ENCODE measurements at regions of chr13 and their contacts with region 1.

Region 1: DNA sequence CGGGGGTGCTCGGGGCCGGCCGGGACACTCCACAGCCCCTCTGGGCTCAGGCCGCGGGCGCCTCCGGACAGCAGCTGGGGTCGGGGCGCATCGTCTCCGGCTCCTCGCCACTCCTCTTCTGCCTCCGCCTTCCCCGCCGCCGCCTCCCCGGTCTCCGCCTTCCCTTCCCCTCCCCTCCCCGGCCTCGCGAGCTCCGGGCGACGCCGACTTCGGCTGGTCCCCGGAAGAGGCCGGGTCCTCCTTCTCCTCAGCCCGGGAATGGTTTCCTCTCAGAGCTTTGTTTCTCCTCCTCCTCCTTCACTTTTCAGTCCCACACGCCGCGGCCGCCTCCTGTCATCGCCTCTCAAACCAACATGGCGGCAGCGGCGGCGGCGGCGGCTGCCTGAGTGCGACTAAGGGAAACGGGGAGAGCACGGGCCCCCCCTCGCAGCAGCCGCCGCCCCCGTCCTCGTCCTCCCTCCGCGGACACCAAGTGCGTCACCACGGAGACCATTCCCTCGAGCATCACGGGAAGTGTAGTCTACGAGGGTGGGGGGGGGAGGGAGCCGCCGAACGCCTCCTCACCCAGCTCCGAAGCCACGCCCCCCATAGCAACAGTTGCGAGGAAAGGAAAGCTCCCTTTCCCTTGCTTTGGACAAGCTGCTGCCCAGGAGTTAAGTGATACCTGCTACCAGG is at the start of gene UBL3:
- DNase-seq: peak; percentile 95
- ATAC-seq: peak; percentile 91
- H3K4me3 ChIP-seq: peak within 1 kb of the TSS; percentile 81
- H3K27ac ChIP-seq: peak within 1 kb of the TSS; percentile 98
- H3K4me1 ChIP-seq: peaks cover 4% of the 10 kb centered on the region; the same call in 1 of the 2 replicates
- H3K27me3 ChIP-seq: no peaks in the 10 kb centered on the region
- CTCF ChIP-seq: no peak
- POLR2A ChIP-seq: peak; percentile 86
- RAD21 ChIP-seq: no peak
- total RNA-seq, gene UBL3: 19.9 and 30.3 TPM in 2 replicates

Region 2: GRCh38 chr13:29716493-29716892 is 133.9 kb before region 1 on chr13:
- CTCF ChIA-PET with region 1: no interaction called
- POLR2A ChIA-PET with region 1: no interaction called
- dilution Hi-C with region 1: no loop called
- in situ Hi-C with region 1: no loop called
- intact Hi-C with region 1: no loop called
- DNase-seq: no peak
- ATAC-seq: no peak
- H3K4me3 ChIP-seq: no peak overlapping the region
- H3K27ac ChIP-seq: no peak overlapping the region
- H3K4me1 ChIP-seq: no peaks in the 10 kb centered on the region
- H3K27me3 ChIP-seq: peaks cover 63% of the 10 kb centered on the region
- CTCF ChIP-seq: no peak
- POLR2A ChIP-seq: no peak
- RAD21 ChIP-seq: no peak

Region 3: GRCh38 chr13:29771247-29771646 is 79.1 kb before region 1 on chr13:
- CTCF ChIA-PET with region 1: interaction called, 3 read pairs
- POLR2A ChIA-PET with region 1: no interaction called
- dilution Hi-C with region 1: no loop called
- in situ Hi-C with region 1: no loop called
- intact Hi-C with region 1: loop called (anchors 2 kb)
- DNase-seq: peak; percentile 49
- ATAC-seq: no peak; the same call in 1 of the 2 replicates
- H3K4me3 ChIP-seq: no peak overlapping the region
- H3K27ac ChIP-seq: no peak overlapping the region
- H3K4me1 ChIP-seq: 0 out of 2 replicates have a peak, but pooled peaks cover 2% of the 10 kb centered on the region
- H3K27me3 ChIP-seq: no peaks in the 10 kb centered on the region
- CTCF ChIP-seq: peak; percentile 59
- POLR2A ChIP-seq: no peak
- RAD21 ChIP-seq: peak; percentile 64

Region 4: DNA sequence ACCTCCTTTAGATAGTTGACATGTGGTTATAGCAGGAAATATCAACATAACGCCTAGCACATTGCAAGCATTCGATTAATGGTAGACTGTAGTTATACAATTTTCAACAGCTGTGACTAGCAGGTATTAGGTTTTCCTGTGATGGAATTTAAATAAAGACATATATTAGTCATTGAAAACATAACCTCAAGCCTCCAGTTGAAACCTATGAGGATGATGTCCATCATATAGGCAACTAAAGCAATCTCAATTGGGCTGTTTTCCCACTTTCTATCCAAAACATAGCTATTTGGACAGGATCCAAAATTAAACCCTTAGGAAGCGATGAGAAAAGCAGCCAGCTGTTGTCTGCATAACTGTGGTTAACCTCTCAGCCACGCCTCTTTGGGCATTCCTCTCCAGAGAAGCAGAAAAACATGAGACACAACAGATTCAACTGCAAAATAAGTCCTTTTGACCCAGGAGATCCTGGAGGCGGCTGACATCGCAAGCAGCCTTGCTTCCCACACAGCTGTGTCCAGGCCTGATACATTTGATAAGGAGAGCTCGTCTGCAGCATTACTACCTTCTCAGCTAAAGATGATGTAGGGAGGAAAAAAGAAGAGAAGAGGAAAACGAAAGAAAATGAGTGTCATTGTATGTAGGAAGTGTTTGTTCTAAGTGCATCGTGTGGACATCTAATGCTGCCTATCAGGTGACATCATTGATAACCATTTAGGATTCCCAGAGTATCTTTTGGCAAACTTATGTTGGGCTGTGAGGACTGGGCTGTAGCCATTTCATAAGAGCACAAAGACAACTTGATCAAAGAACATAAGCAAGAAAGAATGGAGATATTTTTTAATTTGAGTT is 52.0 kb after region 1 on chr13:
- CTCF ChIA-PET with region 1: no interaction called
- POLR2A ChIA-PET with region 1: no interaction called
- dilution Hi-C with region 1: no loop called
- in situ Hi-C with region 1: no loop called
- intact Hi-C with region 1: loop called (anchors 5 kb)
- DNase-seq: peak; percentile 97
- ATAC-seq: peak; percentile 90
- H3K4me3 ChIP-seq: no peak overlapping the region
- H3K27ac ChIP-seq: no peak overlapping the region
- H3K4me1 ChIP-seq: peaks cover 8% of the 10 kb centered on the region; the same call in 1 of the 2 replicates
- H3K27me3 ChIP-seq: peaks cover 2% of the 10 kb centered on the region; the same call in 1 of the 2 replicates
- CTCF ChIP-seq: no peak
- POLR2A ChIP-seq: no peak
- RAD21 ChIP-seq: no peak; the same call in 1 of the 2 replicates

Region 5: GRCh38 chr13:29923554-29924481 is 73.5 kb after region 1 on chr13:
- CTCF ChIA-PET with region 1: interaction called, 8 read pairs
- POLR2A ChIA-PET with region 1: interaction called, 8 read pairs
- dilution Hi-C with region 1: no loop called
- in situ Hi-C with region 1: no loop called
- intact Hi-C with region 1: loop called (anchors 1 kb)
- DNase-seq: peak; percentile 99
- ATAC-seq: peak; percentile 83
- H3K4me3 ChIP-seq: no peak overlapping the region
- H3K27ac ChIP-seq: peak overlapping the region; percentile 77
- H3K4me1 ChIP-seq: peaks cover 27% of the 10 kb centered on the region
- H3K27me3 ChIP-seq: no peaks in the 10 kb centered on the region
- CTCF ChIP-seq: peak; percentile 80
- POLR2A ChIP-seq: no peak
- RAD21 ChIP-seq: peak; percentile 70

Region 6: DNA sequence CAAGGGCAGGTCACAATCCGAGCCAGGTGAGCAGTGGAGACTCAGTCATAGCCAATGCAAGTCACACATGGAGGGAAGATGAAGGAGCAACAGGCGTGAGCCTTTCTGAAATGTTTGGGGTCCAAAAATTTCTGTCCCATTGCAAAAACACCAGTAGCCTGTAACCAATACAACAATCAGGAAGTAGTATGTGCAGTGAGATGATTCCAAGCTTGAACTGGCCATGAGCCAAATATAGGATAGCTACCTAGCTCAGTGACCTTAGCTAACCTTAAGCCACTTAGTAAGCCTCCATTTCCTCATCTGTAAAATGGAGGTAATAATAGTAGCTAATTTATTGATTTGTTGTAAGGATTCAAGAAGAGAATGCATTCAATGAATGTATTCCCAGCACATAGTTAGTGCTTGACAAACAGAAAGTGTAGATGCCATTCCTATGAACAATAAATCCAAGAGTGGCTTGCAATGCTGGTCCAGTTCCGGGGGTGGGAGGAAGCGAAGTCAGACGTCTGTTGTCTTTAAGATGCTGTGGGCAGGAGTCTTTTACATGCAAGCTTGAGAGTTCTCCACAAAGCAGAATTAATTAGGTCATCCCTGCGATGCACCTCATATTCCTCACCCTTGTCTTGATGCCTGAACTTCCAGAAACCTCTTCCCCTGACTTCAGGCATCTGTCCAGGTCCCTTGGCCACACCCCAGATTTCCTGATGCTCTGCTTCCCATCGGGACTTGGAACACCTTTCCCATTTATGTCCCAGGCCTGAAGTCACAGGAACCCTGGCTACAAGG is 195.7 kb after region 1 on chr13:
- CTCF ChIA-PET with region 1: no interaction called
- POLR2A ChIA-PET with region 1: no interaction called
- dilution Hi-C with region 1: no loop called
- in situ Hi-C with region 1: no loop called
- intact Hi-C with region 1: loop called (anchors 10 kb)
- DNase-seq: peak; percentile 88
- ATAC-seq: peak; percentile 98
- H3K4me3 ChIP-seq: no peak overlapping the region
- H3K27ac ChIP-seq: 0 out of 2 replicates have a peak overlapping the region, but pooled peaks have one; percentile 3
- H3K4me1 ChIP-seq: peaks cover 13% of the 10 kb centered on the region
- H3K27me3 ChIP-seq: no peaks in the 10 kb centered on the region
- CTCF ChIP-seq: no peak
- POLR2A ChIP-seq: no peak
- RAD21 ChIP-seq: no peak

Measured in IMR-90 (cell line).